ENCODE measurements at regions of chr7 and their contacts with region 1.

Region 1: DNA sequence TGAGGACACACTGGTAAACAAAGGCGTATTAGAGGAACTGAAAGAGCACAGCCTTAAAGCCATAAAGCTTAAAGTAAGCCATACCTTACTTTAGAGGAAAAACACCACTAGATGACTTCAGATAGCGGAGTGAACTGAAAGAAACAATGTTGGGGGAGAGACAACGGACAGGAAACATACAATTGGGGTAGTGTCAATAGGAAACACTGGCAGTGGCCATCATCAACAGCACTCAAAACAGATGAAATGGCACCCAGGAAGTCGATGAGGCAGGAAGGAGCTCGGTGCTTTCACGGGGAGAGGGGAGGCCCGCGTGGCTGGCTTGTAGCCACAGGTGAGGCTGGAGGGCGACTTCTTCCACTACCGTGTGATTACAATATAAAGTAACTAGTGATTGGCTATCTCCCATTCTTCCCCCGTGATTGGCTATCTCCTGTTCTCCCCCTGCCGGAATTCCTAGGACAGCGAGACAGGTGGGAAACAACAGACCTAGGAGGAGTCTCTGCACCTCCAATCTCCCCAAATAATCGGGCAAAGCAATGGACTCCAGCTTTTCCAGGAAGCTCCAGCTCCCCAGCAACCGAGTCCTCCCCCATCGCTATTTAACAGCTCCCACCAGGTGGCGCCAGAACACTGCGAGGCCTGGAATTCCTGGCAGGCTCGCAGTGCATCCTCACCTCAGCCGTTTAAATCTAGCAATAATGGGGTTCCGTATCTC is 2.4 kb upstream of the TAS2R38 start:
- DNase-seq: peak; percentile 32 to 71
- H3K4me3 ChIP-seq: peak overlapping the region in 2 of 3 donors; percentile 31 to 59
- H3K27ac ChIP-seq: no peak overlapping the region
- H3K4me1 ChIP-seq: no peaks in the 10 kb centered on the region
- H3K27me3 ChIP-seq: no peaks in the 10 kb centered on the region
- CTCF ChIP-seq: peak; percentile 27 to 70 (median 54)
- POLR2A ChIP-seq: no peak

Region 2: GRCh38 chr7:141956084-141956483 is 19.9 kb before region 1 on chr7:
- intact Hi-C with region 1: no loop called
- DNase-seq: no peak
- H3K4me3 ChIP-seq: no peak overlapping the region
- H3K27ac ChIP-seq: no peak overlapping the region
- H3K4me1 ChIP-seq: no peaks in the 10 kb centered on the region
- H3K27me3 ChIP-seq: no peaks in the 10 kb centered on the region
- CTCF ChIP-seq: no peak
- POLR2A ChIP-seq: no peak

Region 3: DNA sequence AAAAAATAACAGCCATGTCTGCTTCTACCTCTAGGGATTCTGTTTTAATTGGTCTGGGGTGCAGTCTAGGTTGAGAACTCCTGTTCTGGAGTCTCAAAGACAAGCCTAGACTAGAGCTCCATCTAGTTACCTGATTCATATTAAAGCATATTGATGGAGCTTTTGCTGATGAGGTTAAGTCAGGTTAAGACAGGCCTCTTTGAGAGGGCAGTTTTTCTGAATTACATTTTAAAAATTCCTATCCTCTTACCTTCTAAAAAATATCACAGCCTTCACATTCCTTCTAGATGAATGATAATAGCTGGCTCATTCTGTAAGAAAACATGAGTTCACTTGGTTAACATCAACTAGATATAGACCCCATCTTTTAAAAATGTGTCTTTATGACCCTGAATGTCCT is 48.6 kb after region 1 on chr7:
- intact Hi-C with region 1: no loop called
- DNase-seq: no peak
- H3K4me3 ChIP-seq: no peak overlapping the region
- H3K27ac ChIP-seq: no peak overlapping the region
- H3K4me1 ChIP-seq: no peaks in the 10 kb centered on the region
- H3K27me3 ChIP-seq: no peaks in the 10 kb centered on the region
- CTCF ChIP-seq: no peak
- POLR2A ChIP-seq: no peak

Region 4: GRCh38 chr7:142188846-142189245 is 212.9 kb after region 1 on chr7:
- intact Hi-C with region 1: loop called (anchors 10 kb)
- DNase-seq: no peak
- H3K4me3 ChIP-seq: no peak overlapping the region
- H3K27ac ChIP-seq: no peak overlapping the region
- H3K4me1 ChIP-seq: no peaks in the 10 kb centered on the region
- H3K27me3 ChIP-seq: no peaks in the 10 kb centered on the region
- CTCF ChIP-seq: peak in 1 of 3 donors; percentile 29
- POLR2A ChIP-seq: no peak

Region 5: GRCh38 chr7:142714375-142714774 is 738.4 kb after region 1 on chr7:
- intact Hi-C with region 1: no loop called
- DNase-seq: no peak
- H3K4me3 ChIP-seq: no peak overlapping the region
- H3K27ac ChIP-seq: no peak overlapping the region
- H3K4me1 ChIP-seq: no peaks in the 10 kb centered on the region
- H3K27me3 ChIP-seq: no peaks in the 10 kb centered on the region
- CTCF ChIP-seq: no peak
- POLR2A ChIP-seq: no peak

Measured in breast epithelium (tissue), 4 donors.